Uterus (tissue), 4 donors: ENCODE measurements at regions of chr12 and their contacts with region 1.

Region 1: DNA sequence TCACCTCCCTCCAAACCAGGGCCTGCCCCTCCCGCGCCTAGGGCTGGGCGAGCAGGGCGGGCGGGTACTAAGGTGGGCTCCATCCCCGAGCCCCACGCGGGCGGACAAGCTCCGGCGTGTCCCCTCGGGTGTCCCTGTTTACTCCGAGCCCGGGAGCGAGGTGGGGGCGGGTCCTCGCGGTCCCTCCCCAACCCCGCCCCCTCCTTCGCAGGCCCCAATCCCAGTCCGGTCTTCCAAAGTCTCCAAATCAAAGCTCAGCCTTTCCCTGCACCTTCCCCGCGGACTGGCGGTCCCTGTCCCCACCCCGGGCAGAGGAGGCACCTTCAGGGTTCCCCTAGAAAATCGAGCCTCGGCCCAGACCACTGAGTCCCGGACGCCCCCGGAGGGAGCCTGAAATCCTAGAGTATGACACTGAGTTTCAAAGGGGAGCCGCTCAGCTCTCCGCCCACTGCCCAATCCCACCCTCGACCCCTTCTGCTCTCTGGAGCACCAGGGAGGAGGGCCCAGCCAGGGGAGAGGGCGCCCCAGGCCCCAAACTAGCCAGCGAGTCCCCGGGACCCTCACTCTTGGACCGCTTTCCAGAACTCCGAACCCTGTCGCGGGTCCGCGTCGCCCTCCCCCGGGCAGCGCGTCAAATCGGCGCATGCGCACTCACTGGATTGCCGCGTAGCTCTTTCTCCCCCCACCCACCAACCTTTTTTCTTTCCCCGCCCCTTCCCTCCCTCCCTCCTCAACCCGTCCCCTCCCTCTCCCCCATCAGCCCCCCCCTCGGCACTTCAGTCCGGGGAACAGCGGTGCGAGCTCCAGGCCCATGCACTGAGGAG is at the start of gene LRP1:
- DNase-seq: peak; percentile 88 to 90
- H3K4me3 ChIP-seq: peak within 1 kb of the TSS; percentile 94 to 99
- H3K27ac ChIP-seq: peak within 1 kb of the TSS; percentile 99 to 100
- H3K4me1 ChIP-seq: peaks cover 0 to 15% of the 10 kb centered on the region in 2 donors
- H3K27me3 ChIP-seq: no peaks in the 10 kb centered on the region
- CTCF ChIP-seq: peak in 1 of 4 experiments; percentile 5
- POLR2A ChIP-seq: peak; percentile 89 to 90
- total RNA-seq, gene LRP1: 164 to 507 (median 318) TPM

Region 2: DNA sequence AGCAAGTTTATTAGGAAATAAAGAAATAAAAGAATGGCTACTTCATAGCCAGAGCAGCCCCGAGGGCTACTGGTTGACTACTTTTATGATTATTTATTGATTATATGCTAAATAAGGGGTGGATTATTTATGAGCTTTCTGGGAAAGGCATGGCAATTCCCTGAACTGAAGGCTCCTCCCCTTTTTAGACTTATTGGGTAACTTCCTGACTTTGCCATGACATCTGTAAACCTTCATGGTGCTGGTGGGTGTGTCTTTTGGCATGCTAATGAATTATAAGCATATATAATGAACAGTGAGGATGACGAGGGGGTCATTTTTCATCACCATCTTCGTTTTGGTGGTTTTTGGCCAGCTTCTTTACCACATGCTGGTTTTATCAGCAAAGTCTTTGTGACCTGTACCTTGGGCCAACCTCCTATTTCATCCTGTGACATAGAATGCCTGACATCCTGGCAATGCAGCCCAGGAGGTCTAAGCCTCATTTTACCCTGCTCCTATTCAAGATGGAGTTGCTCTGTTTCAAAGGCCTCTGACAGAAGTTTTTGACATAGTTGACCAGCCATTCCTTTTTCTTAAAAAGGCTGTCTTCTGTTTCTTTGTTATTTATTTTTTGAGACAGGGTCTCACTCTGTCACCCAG is 428.8 kb before region 1 on chr12:
- intact Hi-C with region 1: no loop called
- DNase-seq: no peak
- H3K4me3 ChIP-seq: no peak overlapping the region
- H3K27ac ChIP-seq: no peak overlapping the region
- H3K4me1 ChIP-seq: no peaks in the 10 kb centered on the region
- H3K27me3 ChIP-seq: no peaks in the 10 kb centered on the region
- CTCF ChIP-seq: no peak
- POLR2A ChIP-seq: no peak

Region 3: DNA sequence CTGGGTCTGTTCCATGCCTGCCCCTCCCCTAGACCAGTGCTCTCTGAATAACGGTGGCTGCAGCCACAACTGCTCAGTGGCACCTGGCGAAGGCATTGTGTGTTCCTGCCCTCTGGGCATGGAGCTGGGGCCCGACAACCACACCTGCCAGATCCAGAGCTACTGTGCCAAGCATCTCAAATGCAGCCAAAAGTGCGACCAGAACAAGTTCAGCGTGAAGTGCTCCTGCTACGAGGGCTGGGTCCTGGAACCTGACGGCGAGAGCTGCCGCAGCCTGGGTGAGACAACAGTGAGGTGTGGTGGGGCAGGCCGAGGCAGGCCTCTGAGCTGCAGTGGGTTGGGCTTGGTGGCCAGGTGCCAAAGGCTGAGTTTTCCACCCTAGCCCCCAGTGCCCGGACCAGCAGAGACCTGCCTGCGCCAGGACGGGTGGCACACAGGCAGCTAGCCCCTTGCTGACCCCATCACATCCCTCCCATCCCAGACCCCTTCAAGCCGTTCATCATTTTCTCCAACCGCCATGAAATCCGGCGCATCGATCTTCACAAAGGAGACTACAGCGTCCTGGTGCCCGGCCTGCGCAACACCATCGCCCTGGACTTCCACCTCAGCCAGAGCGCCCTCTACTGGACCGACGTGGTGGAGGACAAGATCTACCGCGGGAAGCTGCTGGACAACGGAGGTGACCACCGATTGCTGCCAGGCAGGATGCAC is 47.7 kb after region 1 on chr12:
- intact Hi-C with region 1: loop called (anchors 5 kb)
- DNase-seq: peak; percentile 88 to 92
- H3K4me3 ChIP-seq: no peak overlapping the region
- H3K27ac ChIP-seq: peak overlapping the region; percentile 8 to 60
- H3K4me1 ChIP-seq: no peaks in the 10 kb centered on the region
- H3K27me3 ChIP-seq: no peaks in the 10 kb centered on the region
- CTCF ChIP-seq: peak; percentile 71 to 89 (median 82)
- POLR2A ChIP-seq: peak in 1 of 2 donors; percentile 19

Region 4: GRCh38 chr12:57280211-57281062 is 152.5 kb after region 1 on chr12:
- intact Hi-C with region 1: no loop called
- DNase-seq: peak; percentile 50 to 66
- H3K4me3 ChIP-seq: no peak overlapping the region
- H3K27ac ChIP-seq: peak overlapping the region; percentile 49 to 55
- H3K4me1 ChIP-seq: no peaks in the 10 kb centered on the region
- H3K27me3 ChIP-seq: no peaks in the 10 kb centered on the region
- CTCF ChIP-seq: no peak
- POLR2A ChIP-seq: no peak

Region 5: GRCh38 chr12:57632694-57633477 is 505.0 kb after region 1 on chr12 and contains the start of gene B4GALNT1:
- intact Hi-C with region 1: no loop called
- DNase-seq: peak; percentile 28 to 63
- H3K4me3 ChIP-seq: peak within 1 kb of the TSS; percentile 37 to 42
- H3K27ac ChIP-seq: no peak within 1 kb of the TSS
- H3K4me1 ChIP-seq: no peaks in the 10 kb centered on the region
- H3K27me3 ChIP-seq: peaks cover 0 to 9% of the 10 kb centered on the region in 2 donors
- CTCF ChIP-seq: peak; percentile 72 to 95 (median 86)
- POLR2A ChIP-seq: no peak
- total RNA-seq, gene B4GALNT1: 2.9 to 14.1 (median 3.9) TPM